Panc1 (cell line): ENCODE measurements at regions of chr2 and their contacts with region 1.

Region 1: DNA sequence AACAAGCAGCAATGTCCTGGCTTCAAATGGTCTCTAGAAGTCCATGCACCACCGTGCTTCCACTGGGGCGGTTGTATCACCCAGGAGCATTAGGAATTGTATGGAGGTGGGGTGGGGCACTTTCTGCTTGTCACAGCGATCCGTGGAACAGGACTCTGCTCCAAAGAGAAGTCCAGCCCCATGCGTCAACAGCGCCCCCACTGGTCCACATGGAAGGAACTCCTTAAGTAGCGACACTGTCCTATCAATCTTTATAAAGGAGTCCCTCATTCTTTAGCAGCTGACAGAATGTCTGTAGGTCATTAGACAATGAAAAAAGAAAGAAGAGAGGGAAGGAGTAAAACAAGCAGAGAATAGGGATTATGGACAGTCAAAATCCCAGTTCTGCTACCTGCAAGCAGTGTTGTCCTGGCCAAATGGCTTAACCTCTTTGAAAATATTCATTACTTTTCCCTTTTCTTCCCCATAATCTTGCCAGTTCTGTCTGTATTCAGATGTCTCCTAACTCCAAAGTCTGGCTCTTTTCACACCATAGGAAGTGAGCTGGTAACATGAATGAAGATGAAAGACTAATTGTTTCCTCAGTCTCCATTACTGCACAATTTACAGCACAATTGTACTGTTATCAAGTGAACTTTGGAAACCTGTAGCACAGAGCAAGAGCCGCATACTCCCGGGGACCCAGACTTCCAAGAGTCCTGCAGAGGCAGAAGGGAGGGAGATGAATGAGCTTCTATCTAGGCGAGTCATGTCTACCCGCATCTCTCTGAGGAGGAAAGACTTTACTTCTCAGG is 9.9 kb downstream of the NFE2L2 start:
- DNase-seq: no peak
- ATAC-seq: peak; percentile 79
- H3K4me3 ChIP-seq: peak overlapping the region in 1 of 2 experiments; percentile 9; a peak in 2 of 4 replicates
- H3K27ac ChIP-seq: peak overlapping the region; percentile 80
- H3K4me1 ChIP-seq: peaks cover 78% of the 10 kb centered on the region
- H3K27me3 ChIP-seq: no peaks in the 10 kb centered on the region
- CTCF ChIP-seq: peak; percentile 90

Region 2: GRCh38 chr2:176960721-176961120 is 293.9 kb before region 1 on chr2:
- CTCF ChIA-PET with region 1: no interaction called
- POLR2A ChIA-PET with region 1: no interaction called
- in situ Hi-C with region 1: no loop called
- intact Hi-C with region 1: no loop called
- DNase-seq: no peak
- ATAC-seq: no peak
- H3K4me3 ChIP-seq: no peak overlapping the region
- H3K27ac ChIP-seq: no peak overlapping the region
- H3K4me1 ChIP-seq: no peaks in the 10 kb centered on the region
- H3K27me3 ChIP-seq: peaks cover 7% of the 10 kb centered on the region
- CTCF ChIP-seq: no peak

Region 3: GRCh38 chr2:177229448-177230242 is 25.0 kb before region 1 on chr2:
- CTCF ChIA-PET with region 1: interaction called, 4 read pairs
- POLR2A ChIA-PET with region 1: interaction called, 18 read pairs
- in situ Hi-C with region 1: no loop called
- intact Hi-C with region 1: no loop called
- DNase-seq: no peak
- ATAC-seq: no peak
- H3K4me3 ChIP-seq: no peak overlapping the region
- H3K27ac ChIP-seq: peak overlapping the region; percentile 30
- H3K4me1 ChIP-seq: peaks cover 60% of the 10 kb centered on the region
- H3K27me3 ChIP-seq: no peaks in the 10 kb centered on the region
- CTCF ChIP-seq: no peak

Region 4: DNA sequence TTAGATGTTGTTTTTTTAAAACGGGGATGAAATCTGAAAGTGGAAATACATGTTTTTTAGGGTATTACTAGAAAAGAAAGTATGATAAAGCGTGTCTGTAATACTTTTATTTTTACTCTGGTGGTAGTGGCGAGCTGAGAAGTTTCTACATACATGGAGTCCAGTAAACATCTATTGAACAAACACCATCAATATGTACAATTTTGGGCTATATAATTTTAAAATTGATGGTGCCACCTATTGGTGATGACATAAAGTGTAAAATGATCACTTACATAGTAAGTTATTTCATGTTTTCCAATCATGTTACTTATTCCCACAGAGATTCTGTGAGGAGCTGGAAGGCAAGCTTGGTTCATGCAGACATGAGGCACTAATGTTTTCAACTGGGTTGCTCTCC is 41.4 kb after region 1 on chr2:
- CTCF ChIA-PET with region 1: no interaction called
- POLR2A ChIA-PET with region 1: interaction called, 13 read pairs
- in situ Hi-C with region 1: no loop called
- intact Hi-C with region 1: no loop called
- DNase-seq: no peak
- ATAC-seq: peak; percentile 68
- H3K4me3 ChIP-seq: no peak overlapping the region
- H3K27ac ChIP-seq: peak overlapping the region; percentile 70; the same call in 1 of the 2 replicates
- H3K4me1 ChIP-seq: peaks cover 8% of the 10 kb centered on the region; the same call in 1 of the 2 replicates
- H3K27me3 ChIP-seq: no peaks in the 10 kb centered on the region
- CTCF ChIP-seq: peak; percentile 57; the same call in 1 of the 2 replicates

Region 5: GRCh38 chr2:177651833-177652232 is 397.2 kb after region 1 on chr2:
- CTCF ChIA-PET with region 1: no interaction called
- POLR2A ChIA-PET with region 1: no interaction called
- in situ Hi-C with region 1: no loop called
- intact Hi-C with region 1: no loop called
- DNase-seq: no peak
- ATAC-seq: no peak
- H3K4me3 ChIP-seq: no peak overlapping the region
- H3K27ac ChIP-seq: no peak overlapping the region
- H3K4me1 ChIP-seq: no peaks in the 10 kb centered on the region
- H3K27me3 ChIP-seq: peaks cover 8% of the 10 kb centered on the region; the same call in 1 of the 2 replicates
- CTCF ChIP-seq: no peak